Posterior cingulate gyrus (tissue), 11 donors: ENCODE measurements at regions of chr14 and their contacts with region 1.

Region 1: DNA sequence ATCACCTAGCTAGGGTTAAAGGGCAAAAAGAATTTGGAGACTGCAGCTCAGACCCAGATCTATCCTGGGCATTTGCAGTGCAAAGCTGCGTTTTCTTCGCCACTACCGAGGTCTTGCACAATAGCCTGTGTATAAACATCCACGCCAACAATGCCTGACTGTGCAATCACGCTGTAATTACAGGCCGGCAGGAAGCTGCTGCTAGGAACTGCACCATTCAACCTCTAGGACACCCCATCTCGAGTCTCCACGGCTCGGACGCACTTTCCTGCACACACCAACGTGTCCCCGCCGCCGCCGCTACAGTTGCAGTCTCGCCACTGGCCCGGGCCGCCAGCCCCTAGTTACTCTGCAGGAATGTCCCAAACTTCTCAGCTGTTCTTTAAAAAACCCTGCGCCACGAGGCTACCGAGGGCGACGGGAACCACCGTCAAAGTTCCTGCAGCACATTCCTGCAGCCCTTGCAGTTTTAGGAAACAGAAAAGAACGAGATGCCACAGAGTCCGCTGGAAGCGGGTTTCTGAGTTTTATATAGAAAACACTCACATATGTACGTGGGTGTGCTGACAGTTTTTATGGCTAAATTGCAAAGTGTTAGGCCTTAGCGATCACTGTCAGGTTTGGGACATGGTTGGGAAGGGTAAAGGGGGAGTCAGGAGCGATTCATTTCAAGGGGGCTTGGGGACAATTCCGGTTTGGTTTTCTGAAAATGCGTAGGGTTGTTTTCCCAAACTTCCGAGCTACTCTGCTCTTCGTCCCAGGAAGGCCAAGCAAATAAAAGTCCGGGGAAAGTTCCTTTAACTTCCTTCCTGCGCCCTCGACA is 65.5 kb upstream of the PTGR2 start:
- DNase-seq: peak; percentile 41 to 93 (median 58)

Region 2: DNA sequence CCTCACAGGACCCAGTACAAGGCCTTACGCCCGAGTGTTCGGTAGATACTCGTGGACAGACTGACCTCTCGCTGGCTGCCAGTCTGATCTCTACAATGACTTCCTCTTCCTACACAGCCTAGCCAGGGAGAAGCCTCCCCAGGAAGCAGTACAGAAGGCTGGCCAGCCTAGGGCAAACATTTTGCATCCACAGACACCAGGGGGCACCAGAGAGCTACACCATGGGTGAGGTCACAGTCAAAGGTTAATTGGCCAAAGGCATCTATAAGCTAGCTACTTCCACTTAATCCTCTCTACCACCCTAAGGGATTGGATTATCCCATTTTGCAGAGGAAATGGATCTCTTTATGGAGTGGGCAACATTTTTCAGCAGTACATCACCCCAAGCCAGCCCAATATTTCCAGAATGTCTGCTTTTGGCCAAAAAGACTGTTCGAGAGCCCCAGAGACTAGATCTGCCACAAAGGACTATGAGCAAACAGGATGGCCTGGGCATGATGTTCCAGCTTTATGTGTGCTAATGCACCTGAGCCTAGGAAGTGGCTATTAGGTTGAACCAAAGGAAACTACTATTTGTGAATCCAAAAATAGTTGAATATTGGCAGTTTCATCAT is 57.3 kb before region 1 on chr14:
- intact Hi-C with region 1: loop called (anchors 10 kb)
- DNase-seq: peak in 9 of 10 donors; percentile 64 to 96 (median 90)

Region 3: GRCh38 chr14:73759714-73760597 is 26.1 kb before region 1 on chr14:
- intact Hi-C with region 1: loop called (anchors 2 kb)
- DNase-seq: peak; percentile 81 to 99 (median 90)

Region 4: DNA sequence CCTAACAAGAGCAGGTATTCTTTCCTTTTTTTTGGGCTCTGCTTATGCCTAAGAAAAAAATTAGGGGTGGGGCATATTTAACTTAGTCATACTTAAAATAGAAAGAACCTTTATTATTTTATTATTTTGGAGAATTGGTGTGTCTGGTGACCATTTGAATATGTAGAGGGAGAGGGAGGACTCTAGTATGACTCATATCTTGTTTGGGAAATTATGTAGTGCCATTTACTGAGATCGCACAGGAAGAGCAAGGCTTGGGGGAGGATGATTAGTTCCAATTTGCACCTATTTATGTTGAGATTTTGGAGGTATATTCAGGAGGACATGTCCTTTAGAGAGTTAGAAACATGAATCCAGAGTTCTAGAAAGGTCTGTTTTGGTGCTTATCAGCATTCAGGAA is 110.4 kb after region 1 on chr14:
- intact Hi-C with region 1: no loop called
- DNase-seq: no peak